HEK293T (cell line): ENCODE measurements at regions of chr4 and their contacts with region 1.

Region 1: DNA sequence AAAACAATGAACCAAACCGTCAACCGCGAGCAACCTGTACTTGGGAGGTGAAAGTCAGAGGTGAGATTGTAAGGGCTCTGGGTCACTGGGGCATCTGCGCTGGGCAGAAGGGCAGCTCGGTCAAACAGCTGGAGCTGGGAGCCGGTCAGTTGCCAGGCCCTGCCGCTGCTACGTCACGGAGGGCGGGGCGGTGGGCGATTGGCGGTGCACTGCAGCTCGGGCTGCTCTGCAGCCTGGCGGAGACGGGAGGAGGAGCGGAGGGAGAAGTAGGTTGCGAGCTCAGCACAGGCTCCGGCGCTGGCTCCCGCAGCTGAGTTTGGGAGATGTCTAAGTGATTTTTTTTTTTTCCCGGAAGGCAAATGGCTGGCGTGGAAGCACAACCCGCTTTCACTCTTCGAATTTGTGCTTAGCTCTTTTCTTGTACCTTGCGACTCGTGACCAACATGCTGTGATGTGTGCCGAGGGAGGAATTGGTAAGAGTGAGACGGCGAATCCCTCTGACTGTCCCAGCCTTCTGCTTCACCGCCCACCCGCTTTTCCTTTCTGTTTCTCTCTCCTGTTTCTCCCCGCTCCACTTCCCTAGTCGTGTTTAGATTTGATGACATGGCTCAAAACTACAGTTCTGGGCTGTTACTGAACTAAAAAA is at the start of gene ATP10D:
- DNase-seq: peak; percentile 76

Region 2: GRCh38 chr4:47160095-47160494 is 325.1 kb before region 1 on chr4:
- CTCF ChIA-PET with region 1: no interaction called
- POLR2A ChIA-PET with region 1: no interaction called
- DNase-seq: no peak

Region 3: DNA sequence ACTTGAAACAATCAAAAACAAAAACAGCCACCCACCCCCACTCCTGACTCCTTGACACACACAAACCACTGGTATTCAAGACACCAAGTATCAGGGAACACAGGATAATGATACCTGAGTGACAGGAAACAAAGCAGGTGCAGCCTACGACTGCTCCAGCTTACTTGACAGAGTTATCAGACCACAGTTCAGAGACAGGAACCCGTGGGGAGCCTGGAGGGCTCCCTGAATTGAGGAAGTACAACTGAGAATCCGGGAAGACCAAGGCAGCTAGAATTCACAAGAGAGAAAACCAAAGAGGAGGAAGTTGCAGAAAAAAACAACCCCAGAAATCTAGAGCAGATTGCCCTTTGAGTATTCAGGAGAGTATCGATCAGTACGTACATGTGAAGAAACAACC is 42.2 kb before region 1 on chr4:
- CTCF ChIA-PET with region 1: no interaction called
- POLR2A ChIA-PET with region 1: no interaction called
- DNase-seq: no peak

Region 4: GRCh38 chr4:47463235-47463956 is 21.8 kb before region 1 on chr4 and contains the start of gene COMMD8:
- CTCF ChIA-PET with region 1: no interaction called
- POLR2A ChIA-PET with region 1: interaction called, 16 read pairs
- DNase-seq: peak; percentile 90

Region 5: DNA sequence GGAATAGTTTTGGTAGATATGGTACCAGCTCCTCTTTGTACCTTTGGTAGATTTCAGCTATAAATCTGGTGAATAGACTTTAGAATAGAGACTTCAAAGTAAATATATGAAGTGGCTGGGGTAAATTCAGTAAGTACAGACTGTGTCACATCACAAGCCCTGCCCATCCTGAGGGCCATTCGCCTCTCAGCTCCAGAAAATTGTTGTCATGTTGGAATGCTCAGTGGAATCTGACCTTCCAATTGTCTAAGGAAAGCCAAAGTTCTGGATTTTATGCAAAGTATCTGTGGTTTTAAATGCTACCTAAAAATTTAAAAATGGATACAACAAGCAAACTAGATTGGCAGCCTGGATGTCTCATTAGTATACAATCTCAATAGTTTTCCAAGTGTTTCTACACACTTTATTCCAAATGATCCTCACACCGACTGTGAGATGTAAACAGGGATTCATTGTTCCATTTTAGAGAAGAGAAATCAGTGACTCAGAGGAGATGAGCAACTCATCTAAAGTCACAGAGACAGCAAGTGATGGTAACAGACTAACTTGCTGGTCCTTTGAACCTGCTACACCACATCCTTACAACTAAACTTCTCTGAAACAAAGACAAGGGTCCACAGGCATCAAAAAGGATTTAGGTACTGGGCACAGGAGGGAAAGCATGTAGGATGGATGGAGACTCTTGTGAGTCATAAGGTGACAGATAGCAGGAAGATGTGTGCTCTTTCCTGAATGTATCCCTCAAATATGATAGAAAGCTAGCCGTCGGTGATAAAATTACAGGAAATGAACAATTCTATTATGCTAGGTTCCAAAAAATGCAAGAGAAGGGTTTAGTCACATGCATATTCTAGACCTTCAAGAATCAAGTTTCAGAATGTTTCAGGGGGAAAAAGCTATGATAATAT is 127.2 kb after region 1 on chr4:
- CTCF ChIA-PET with region 1: no interaction called
- POLR2A ChIA-PET with region 1: no interaction called
- DNase-seq: no peak